GM12878 (cell line): ENCODE measurements at regions of chr2 and their contacts with region 1.

Region 1: GRCh38 chr2:25197336-25198208 is 29.2 kb upstream of the POMC start:
- DNase-seq: no peak
- ATAC-seq: no peak
- H3K4me3 ChIP-seq: no peak overlapping the region
- H3K27ac ChIP-seq: no peak overlapping the region
- H3K4me1 ChIP-seq: peaks cover 7% of the 10 kb centered on the region; the same call in 1 of the 2 replicates
- H3K27me3 ChIP-seq: no peaks in the 10 kb centered on the region
- CTCF ChIP-seq: no peak
- EP300 ChIP-seq: no peak
- POLR2A ChIP-seq: no peak
- RAD21 ChIP-seq: no peak

Region 2: DNA sequence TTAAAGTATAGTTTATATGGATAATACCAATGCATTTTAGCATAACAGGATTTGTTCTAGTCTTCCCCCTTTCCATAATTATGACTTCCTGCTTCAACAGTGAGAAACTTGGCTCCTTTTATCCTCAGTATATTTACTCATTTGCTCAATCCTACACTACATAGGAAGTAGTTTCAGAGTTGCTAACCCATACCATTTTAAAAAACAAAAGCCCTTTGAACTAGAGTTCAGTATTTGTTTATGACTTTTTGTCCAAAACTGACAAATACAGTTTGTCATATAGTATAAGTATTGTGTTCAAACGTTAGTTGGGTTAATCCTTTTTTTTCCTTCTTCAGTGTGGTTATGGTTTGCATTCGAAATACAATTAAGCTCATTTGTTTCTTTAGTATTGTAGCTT is 219.9 kb before region 1 on chr2:
- CTCF ChIA-PET with region 1: interaction called, 55 read pairs
- POLR2A ChIA-PET with region 1: no interaction called
- RAD21 ChIA-PET with region 1: interaction called, 11 read pairs
- SMC1A ChIA-PET with region 1: interaction called, 14 read pairs
- in situ Hi-C with region 1: loop called (anchors 5 kb)
- intact Hi-C with region 1: loop called (anchors 2 kb)
- DNase-seq: no peak
- ATAC-seq: no peak
- H3K4me3 ChIP-seq: no peak overlapping the region
- H3K27ac ChIP-seq: no peak overlapping the region
- H3K4me1 ChIP-seq: no peaks in the 10 kb centered on the region
- H3K27me3 ChIP-seq: no peaks in the 10 kb centered on the region
- CTCF ChIP-seq: no peak
- EP300 ChIP-seq: no peak
- POLR2A ChIP-seq: no peak
- RAD21 ChIP-seq: no peak

Region 3: GRCh38 chr2:25899404-25899970 is 701.9 kb after region 1 on chr2:
- CTCF ChIA-PET with region 1: no interaction called
- POLR2A ChIA-PET with region 1: no interaction called
- RAD21 ChIA-PET with region 1: no interaction called
- SMC1A ChIA-PET with region 1: no interaction called
- in situ Hi-C with region 1: no loop called
- intact Hi-C with region 1: no loop called
- DNase-seq: no peak
- ATAC-seq: no peak
- H3K4me3 ChIP-seq: no peak overlapping the region
- H3K27ac ChIP-seq: no peak overlapping the region
- H3K4me1 ChIP-seq: no peaks in the 10 kb centered on the region
- H3K27me3 ChIP-seq: no peaks in the 10 kb centered on the region; a peak in 2 of 4 replicates
- CTCF ChIP-seq: no peak
- EP300 ChIP-seq: no peak
- POLR2A ChIP-seq: no peak
- RAD21 ChIP-seq: no peak